Mammary epithelial cell (primary cell): ENCODE measurements at regions of chr6 and their contacts with region 1.

Region 1: DNA sequence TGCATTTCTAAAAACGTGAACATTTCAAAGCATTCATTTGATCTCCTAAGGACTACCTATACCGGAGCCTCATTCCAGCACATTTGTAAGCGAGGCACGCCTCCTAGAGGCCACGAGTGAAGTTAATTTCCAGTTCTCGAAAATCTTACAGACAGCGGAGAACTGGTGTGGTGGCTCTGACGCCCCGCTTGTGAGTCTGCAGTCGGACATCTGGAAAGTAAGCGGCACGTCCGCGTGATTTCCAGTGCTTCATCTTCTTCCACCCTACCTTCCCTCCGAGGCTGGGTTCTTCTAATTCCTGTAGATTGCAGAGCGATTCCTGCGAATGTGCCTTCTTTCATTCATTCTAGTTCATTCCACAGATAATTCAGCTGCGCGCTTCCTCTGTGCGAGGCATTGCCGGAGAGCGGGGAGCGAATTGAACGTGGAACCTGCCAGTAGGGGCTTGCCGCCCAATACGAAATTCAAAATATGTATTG is 810 bp upstream of the PRIM2 start:
- DNase-seq: peak; percentile 87
- H3K4me3 ChIP-seq: peak overlapping the region; percentile 74 to 87 (median 85)
- H3K27ac ChIP-seq: peak overlapping the region; percentile 83
- H3K4me1 ChIP-seq: peaks cover 33% of the 10 kb centered on the region
- H3K27me3 ChIP-seq: no peaks in the 10 kb centered on the region
- CTCF ChIP-seq: peak; percentile 75 to 84

Region 2: DNA sequence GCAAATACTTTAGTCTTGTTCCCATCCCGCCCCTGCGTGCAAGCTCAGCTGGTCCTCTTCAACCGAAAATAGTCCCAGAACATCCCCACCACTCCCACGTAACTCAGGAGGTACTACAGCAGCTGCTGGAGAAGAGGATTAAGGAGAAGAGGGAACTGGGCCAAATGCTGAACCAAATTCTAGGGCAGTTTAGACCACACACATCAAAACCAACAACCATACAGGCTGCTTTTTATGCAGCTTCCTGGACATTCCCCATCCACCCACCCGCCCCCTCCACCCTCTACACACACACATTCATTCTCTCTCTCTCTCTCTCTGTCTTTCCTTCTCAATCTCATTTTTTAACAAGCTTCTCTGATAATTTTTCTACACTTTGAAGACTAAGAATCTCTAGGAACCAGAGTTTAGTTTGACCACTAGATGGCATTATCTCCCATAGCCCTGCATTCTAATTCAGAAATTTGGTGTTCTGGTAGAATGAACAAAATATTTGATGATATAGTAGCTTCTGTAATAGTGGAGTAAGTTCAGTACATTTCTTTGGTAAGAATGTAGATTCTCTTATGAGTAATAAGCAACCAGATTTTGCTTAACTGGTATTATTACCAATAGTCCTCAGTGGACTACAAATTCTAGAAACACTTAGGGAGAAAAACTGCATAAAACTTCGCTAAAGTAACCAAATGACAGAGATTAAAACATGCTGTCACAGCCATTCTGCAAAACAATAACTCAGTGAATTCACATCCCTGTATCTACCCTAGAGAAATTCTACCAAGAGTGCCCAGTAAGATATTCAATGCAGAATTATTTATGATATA is 413.8 kb before region 1 on chr6:
- CTCF ChIA-PET with region 1: interaction called, 3 read pairs
- dilution Hi-C with region 1: no loop called
- in situ Hi-C with region 1: loop called (anchors 10 to 25 kb)
- intact Hi-C with region 1: loop called (anchors 1 kb)
- DNase-seq: peak; percentile 31
- H3K4me3 ChIP-seq: no peak overlapping the region
- H3K27ac ChIP-seq: no peak overlapping the region
- H3K4me1 ChIP-seq: peaks cover 15% of the 10 kb centered on the region
- H3K27me3 ChIP-seq: no peaks in the 10 kb centered on the region
- CTCF ChIP-seq: peak; percentile 56 to 68

Region 3: GRCh38 chr6:56955171-56956045 is 361.2 kb before region 1 on chr6:
- CTCF ChIA-PET with region 1: interaction called, 5 read pairs
- dilution Hi-C with region 1: no loop called
- in situ Hi-C with region 1: no loop called
- intact Hi-C with region 1: loop called (anchors 1 kb)
- DNase-seq: peak; percentile 96
- H3K4me3 ChIP-seq: peak overlapping the region; percentile 50 to 87 (median 80)
- H3K27ac ChIP-seq: peak overlapping the region; percentile 50
- H3K4me1 ChIP-seq: peaks cover 45% of the 10 kb centered on the region
- H3K27me3 ChIP-seq: no peaks in the 10 kb centered on the region
- CTCF ChIP-seq: peak; percentile 59 to 94

Region 4: DNA sequence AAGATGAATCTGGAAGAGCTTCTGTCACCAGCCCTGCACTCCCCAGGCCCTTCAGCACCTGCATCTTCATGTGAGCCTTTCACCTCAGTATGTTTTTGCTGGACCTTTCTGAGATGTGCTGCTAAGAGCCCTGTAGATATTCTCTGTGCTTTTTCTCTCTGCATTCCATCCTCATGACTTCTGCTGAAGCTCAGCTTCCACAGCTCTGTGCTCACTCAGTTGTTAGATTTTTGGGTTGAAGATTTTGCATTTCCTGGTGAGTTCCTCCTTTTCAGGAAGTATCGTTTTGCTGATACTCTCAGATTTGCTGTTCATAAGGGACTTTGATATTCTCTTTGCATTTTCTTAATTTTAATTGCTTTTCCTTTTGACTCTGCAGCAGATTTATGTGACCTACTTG is 251.8 kb before region 1 on chr6:
- CTCF ChIA-PET with region 1: no interaction called
- dilution Hi-C with region 1: loop called (anchors 10 kb)
- in situ Hi-C with region 1: no loop called
- intact Hi-C with region 1: no loop called
- DNase-seq: no peak
- H3K4me3 ChIP-seq: no peak overlapping the region
- H3K27ac ChIP-seq: no peak overlapping the region
- H3K4me1 ChIP-seq: no peaks in the 10 kb centered on the region
- H3K27me3 ChIP-seq: no peaks in the 10 kb centered on the region
- CTCF ChIP-seq: no peak

Region 5: GRCh38 chr6:57172136-57173055 is 144.2 kb before region 1 on chr6 and contains the start of gene BAG2:
- CTCF ChIA-PET with region 1: no interaction called
- dilution Hi-C with region 1: no loop called
- in situ Hi-C with region 1: no loop called
- intact Hi-C with region 1: loop called (anchors 1 kb)
- DNase-seq: peak; percentile 71
- H3K4me3 ChIP-seq: peak within 1 kb of the TSS; percentile 49 to 65 (median 59)
- H3K27ac ChIP-seq: peak within 1 kb of the TSS; percentile 45
- H3K4me1 ChIP-seq: peaks cover 15% of the 10 kb centered on the region
- H3K27me3 ChIP-seq: no peaks in the 10 kb centered on the region
- CTCF ChIP-seq: peak in 1 of 2 donors; percentile 25
- total RNA-seq, gene BAG2: 2.1 to 2.3 TPM

Region 6: GRCh38 chr6:57190140-57190539 is 126.5 kb before region 1 on chr6:
- CTCF ChIA-PET with region 1: no interaction called
- dilution Hi-C with region 1: no loop called
- in situ Hi-C with region 1: loop called in 1 of 2 experiments (anchors 10 kb)
- intact Hi-C with region 1: loop called (anchors 1 kb)
- DNase-seq: peak; percentile 3
- H3K4me3 ChIP-seq: no peak overlapping the region
- H3K27ac ChIP-seq: no peak overlapping the region
- H3K4me1 ChIP-seq: no peaks in the 10 kb centered on the region
- H3K27me3 ChIP-seq: no peaks in the 10 kb centered on the region
- CTCF ChIP-seq: peak in 1 of 2 donors; percentile 37

Region 7: GRCh38 chr6:57267586-57268293 is 48.9 kb before region 1 on chr6:
- CTCF ChIA-PET with region 1: interaction called, 4 read pairs
- dilution Hi-C with region 1: no loop called
- in situ Hi-C with region 1: no loop called
- intact Hi-C with region 1: loop called (anchors 1 kb)
- DNase-seq: peak; percentile 94
- H3K4me3 ChIP-seq: no peak overlapping the region
- H3K27ac ChIP-seq: peak overlapping the region; percentile 24
- H3K4me1 ChIP-seq: peaks cover 14% of the 10 kb centered on the region
- H3K27me3 ChIP-seq: no peaks in the 10 kb centered on the region
- CTCF ChIP-seq: peak; percentile 55 to 75